PC-3 (cell line): ENCODE measurements at regions of chr14 and their contacts with region 1.

Region 1: GRCh38 chr14:61321385-61322010 is at the start of gene PRKCH:
- DNase-seq: peak; percentile 90
- ATAC-seq: peak; percentile 71
- H3K4me3 ChIP-seq: peak within 1 kb of the TSS; percentile 72
- H3K27ac ChIP-seq: peak within 1 kb of the TSS; percentile 44
- H3K4me1 ChIP-seq: peaks cover 23% of the 10 kb centered on the region
- H3K27me3 ChIP-seq: no peaks in the 10 kb centered on the region
- CTCF ChIP-seq: peak; percentile 58
- total RNA-seq, gene PRKCH: 80.8 and 170 TPM in 2 replicates

Region 2: DNA sequence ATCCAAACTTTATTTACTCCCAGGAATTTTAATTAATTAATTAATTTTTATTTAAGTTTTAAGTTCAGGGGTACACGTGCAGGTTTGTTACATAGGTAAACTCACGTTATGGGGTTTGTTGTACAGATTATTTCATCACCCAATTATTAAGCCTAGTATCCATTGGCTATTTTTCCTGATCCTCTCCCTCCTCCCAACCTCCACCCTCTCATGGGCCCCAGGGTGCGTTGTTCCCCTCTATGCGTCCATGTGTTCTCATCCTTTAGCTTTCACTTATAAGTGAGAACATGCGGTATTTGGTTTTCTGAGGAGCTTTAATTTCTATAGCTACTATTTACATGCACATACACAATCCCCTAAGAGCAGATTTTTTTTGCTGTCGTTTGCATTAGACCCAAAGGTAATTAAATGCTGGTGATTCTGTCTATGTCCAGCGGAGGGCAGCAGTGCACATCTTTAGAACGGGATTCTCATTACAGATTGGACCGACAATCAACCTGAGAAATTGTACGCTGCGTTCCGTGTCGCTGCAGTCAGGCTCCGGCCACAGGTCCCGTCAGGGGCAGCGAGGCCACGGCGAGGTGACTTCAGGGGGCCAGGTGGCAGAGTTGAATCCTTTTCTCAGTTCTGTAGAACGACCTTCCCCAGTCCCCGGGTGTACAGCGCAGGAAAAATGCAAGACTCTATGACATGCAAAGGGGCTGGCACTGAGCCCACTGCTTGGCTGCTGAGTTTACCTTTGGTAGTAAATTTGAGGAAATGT is 52.0 kb before region 1 on chr14:
- CTCF ChIA-PET with region 1: no interaction called
- POLR2A ChIA-PET with region 1: interaction called, 3 read pairs
- intact Hi-C with region 1: loop called (anchors 2 kb)
- DNase-seq: peak; percentile 98
- ATAC-seq: peak; percentile 71
- H3K4me3 ChIP-seq: peak overlapping the region; percentile 65
- H3K27ac ChIP-seq: no peak overlapping the region
- H3K4me1 ChIP-seq: peaks cover 6% of the 10 kb centered on the region
- H3K27me3 ChIP-seq: no peaks in the 10 kb centered on the region
- CTCF ChIP-seq: peak; percentile 97

Region 3: GRCh38 chr14:61287196-61287595 is 34.3 kb before region 1 on chr14:
- CTCF ChIA-PET with region 1: interaction called, 5 read pairs
- POLR2A ChIA-PET with region 1: interaction called, 17 read pairs
- intact Hi-C with region 1: no loop called
- DNase-seq: peak; percentile 40
- ATAC-seq: no peak
- H3K4me3 ChIP-seq: no peak overlapping the region
- H3K27ac ChIP-seq: no peak overlapping the region
- H3K4me1 ChIP-seq: peaks cover 45% of the 10 kb centered on the region
- H3K27me3 ChIP-seq: no peaks in the 10 kb centered on the region
- CTCF ChIP-seq: no peak

Region 4: GRCh38 chr14:61355892-61356325 is 34.4 kb after region 1 on chr14:
- CTCF ChIA-PET with region 1: no interaction called
- POLR2A ChIA-PET with region 1: interaction called, 5 read pairs
- intact Hi-C with region 1: loop called (anchors 1 kb)
- DNase-seq: peak; percentile 100
- ATAC-seq: peak; percentile 99
- H3K4me3 ChIP-seq: peak overlapping the region; percentile 60
- H3K27ac ChIP-seq: peak overlapping the region; percentile 75
- H3K4me1 ChIP-seq: peaks cover 25% of the 10 kb centered on the region
- H3K27me3 ChIP-seq: no peaks in the 10 kb centered on the region
- CTCF ChIP-seq: no peak

Region 5: GRCh38 chr14:61388173-61388975 is 66.9 kb after region 1 on chr14:
- CTCF ChIA-PET with region 1: no interaction called
- POLR2A ChIA-PET with region 1: interaction called, 11 read pairs
- intact Hi-C with region 1: loop called (anchors 1 kb)
- DNase-seq: peak; percentile 90
- ATAC-seq: peak; percentile 86
- H3K4me3 ChIP-seq: peak overlapping the region; percentile 5; the same call in 1 of the 2 replicates
- H3K27ac ChIP-seq: peak overlapping the region; percentile 90
- H3K4me1 ChIP-seq: peaks cover 28% of the 10 kb centered on the region
- H3K27me3 ChIP-seq: no peaks in the 10 kb centered on the region
- CTCF ChIP-seq: no peak

Region 6: DNA sequence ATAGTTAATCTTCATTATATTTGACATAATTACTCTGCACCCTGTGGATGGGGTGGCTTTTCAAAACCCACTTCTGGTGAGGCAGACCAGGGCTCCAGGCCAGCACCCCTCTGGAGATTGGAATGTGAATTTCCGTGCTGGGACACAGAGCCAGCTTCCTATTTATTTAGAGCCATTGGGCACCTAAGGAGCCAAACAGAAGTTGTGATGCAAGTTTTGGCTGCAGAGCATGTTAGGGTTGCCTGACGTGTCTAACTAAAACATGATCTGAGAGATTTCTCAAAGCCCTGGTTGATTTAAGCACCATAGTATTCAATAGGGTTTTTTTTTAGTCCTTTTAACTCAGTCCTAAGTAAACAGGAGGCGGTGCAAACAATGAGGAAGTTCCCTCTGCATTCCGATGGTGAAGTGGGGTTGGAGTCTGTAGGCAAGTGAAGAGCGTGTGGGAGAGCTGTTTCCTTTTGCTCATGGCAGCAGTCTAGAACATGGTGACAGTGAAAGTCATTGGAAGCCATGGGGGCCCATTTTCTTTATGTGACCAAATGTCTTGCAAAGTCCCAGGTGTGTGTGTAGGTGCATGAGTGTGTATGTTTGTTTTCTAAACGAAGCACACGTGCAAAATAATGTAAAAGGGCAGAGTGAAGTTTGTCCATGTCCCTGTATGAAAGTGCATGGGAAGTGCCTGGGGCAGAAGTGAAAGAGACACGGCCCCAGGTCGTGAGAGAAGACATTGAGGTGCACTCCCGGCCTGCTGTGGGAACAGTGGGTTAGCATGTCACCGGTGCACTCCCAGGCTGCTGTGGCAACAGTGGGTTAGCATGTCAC is 117.6 kb after region 1 on chr14:
- CTCF ChIA-PET with region 1: no interaction called
- POLR2A ChIA-PET with region 1: no interaction called
- intact Hi-C with region 1: loop called (anchors 2 kb)
- DNase-seq: peak; percentile 96
- ATAC-seq: peak; percentile 89
- H3K4me3 ChIP-seq: peak overlapping the region; percentile 48
- H3K27ac ChIP-seq: peak overlapping the region; percentile 76
- H3K4me1 ChIP-seq: peaks cover 32% of the 10 kb centered on the region
- H3K27me3 ChIP-seq: no peaks in the 10 kb centered on the region
- CTCF ChIP-seq: no peak